ENCODE measurements at regions of chr6 and their contacts with region 1.

Region 1: DNA sequence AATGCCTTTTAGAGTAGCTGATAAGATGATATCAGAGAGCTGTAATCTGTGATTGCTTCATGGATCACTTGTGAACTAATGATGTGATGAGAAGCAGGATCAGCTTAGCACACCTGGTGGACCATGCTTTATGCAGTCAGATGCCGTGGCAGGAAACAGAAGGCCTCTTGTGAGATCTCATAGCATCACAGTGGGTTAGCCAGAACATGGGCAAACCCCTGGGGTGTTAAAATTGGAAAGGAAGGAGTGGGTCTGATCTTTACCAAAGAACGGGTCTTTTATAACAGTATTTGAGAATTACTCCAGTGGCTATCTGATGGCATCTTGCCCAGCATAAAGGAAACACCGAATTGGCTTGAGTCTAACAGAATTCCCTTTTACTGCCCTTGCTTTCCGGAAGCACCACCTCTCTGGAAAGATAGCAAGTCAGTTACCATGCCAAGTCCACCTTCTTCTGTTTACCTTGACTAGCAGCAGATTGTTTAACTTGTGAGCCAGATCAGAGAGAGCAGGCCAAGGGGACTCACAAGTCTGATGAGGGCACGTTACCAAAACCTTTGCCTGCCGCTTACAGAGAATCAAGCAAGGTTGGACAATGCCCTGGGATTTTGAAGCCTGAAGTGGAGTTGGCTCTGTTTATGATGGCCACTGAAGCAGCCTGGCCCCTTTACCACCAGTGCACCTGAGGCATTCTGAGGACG is 20.9 kb upstream of the SRF start:
- DNase-seq: no peak

Region 2: GRCh38 chr6:43089874-43090558 is 60.2 kb before region 1 on chr6:
- intact Hi-C with region 1: no loop called
- DNase-seq: no peak

Region 3: DNA sequence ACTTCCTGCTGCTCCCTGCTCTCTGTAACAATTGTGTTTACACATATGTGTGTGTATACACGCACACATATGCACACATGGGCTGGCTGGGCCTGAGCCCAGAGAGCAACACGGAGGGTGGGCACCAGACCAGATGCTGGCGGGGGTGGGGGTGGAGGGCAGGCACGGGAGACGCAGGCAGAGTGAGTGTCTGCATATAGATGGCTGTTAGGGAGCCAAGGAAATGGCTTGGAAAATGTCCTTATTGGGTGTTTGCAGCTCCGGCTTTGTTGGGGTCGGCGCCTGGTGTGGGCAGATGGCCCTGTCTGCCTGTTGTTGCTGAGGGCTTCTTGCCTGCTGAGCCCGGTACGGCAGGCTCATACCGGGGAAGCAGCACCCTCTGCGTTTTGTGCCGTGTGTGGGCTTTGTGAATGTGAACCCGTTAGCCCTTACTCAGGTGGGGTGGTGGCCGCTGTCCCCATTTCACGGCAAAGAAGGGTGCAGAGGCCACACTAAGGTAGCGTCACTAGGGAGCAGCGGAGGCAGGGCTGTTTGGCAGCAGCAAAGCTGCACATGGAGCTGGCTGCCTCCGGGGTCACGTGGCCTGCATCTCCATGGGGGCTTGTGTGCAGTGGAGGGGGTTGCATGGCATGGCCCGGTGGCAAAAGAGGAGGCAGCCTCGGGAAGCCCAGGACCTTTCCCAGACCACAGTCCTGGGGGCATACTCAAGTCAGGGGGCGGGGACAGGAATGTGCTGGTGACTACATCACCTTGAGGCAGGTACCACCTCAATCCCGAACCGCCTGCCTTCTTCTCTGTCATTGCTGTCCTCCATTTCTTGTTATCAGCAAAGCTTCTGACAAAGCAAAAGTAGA is 26.5 kb before region 1 on chr6:
- intact Hi-C with region 1: loop called in 1 of 2 experiments (anchors 1 kb)
- DNase-seq: peak; percentile 73

Region 4: DNA sequence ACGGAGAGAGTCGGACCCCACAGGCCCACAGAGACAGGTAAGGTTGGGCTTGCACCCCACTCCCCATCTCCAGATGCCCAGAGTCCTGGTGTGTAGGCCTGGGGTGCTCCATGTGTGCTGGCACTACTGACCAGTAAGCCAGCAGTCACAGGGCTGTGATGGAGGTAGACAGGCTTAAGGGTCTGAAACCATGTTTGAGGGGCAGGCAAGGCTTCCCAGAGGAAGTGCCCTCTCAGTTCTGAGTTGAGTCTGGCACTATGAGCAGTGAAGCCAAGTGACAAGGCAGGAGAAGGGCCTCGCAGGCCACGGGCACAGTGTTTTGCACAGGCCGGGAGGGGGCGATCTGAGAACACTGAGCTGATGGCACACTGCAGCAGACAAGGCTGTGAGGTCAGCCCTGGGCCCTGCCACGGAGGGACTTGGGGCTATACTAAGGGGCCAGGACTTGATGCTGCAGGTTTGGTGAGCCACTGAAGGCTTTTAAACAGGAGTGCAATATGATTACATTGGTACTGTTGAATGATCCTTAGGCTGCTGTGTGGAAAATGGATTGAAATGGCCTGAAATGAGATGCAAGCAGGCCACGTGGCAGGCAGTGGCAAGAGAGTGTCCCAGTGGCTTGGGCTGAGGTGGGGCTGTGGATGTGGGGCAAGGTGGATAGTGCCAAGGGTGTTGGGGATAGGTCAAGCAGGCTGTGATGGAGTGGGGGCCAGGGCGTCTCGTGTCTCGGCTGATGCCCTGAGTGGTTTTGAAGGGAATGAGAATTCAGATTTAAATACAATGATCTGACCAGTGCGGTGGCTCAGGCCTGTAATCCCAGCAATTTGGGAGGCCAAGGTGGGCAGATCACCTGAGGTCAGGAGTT is 113.3 kb after region 1 on chr6:
- intact Hi-C with region 1: no loop called
- DNase-seq: peak; percentile 93

Region 5: DNA sequence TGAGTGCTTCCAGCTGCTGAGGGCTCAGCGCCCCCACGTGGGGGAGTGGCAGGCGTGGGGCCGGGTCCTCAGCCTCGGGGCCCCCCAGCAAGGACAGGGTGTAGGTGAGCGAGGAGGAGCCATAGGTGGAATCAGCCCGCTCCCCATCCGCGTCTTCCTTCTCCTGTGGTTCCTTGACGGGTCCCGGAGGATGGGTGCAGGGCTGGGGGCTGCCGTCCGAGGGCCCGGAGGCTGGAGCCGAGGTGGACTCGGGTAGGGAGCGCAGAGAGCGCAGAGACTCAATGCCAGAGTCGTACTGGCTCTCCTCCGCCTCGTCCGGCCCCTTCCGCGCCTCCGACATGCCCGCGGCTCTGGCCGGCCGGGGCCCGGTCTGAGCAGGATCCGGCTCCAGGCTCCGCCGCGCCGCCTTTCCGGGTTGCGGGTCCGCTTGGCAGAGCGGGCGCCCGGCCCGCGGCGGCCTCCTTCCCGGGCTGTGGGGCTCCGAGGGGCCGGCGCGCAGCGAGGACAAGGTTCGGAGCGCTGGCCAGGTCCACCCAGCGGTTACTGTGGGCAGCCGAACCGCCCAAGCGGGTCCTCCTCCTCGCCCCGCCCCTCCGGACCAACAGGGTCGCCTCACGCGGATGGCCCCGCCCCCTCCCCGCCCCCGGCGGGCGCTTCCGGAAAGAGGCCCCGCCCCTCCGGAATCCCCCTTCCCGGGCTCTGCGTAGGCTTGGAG is 1115.0 kb after region 1 on chr6 and contains the start of gene NFKBIE:
- intact Hi-C with region 1: no loop called
- DNase-seq: peak; percentile 98
- total RNA-seq, gene NFKBIE: 4.5 to 6.7 TPM